ENCODE measurements at regions of chr3 and their contacts with region 1.

Region 1: DNA sequence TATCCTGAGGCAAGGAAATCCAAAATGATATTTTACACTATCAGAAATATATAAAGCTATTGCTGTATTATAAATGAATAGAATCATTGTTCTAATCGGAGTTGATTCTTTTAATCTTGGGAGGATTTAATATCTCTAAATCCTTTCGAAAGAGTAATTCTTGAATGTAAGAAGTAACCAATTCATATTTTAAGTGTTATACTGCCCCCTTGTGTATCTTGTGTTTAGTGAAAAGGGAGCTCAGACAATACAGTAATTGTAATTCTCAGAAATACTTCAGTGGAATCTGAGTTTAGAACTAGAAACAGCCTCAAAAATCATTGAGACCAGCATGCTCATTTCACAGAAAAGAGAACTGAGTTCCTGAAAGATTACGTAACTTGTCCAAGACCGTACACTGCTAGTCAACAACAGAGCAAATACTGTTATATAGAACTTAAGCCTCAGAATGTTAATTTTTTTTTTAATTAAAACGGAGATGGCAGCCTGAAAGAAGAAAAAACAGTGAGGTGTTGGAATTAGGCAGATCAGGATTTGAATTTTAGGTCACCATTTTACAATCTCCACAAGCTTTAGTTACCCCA is 42.9 kb downstream of the PLCH1 start:
- DNase-seq: peak in 3 of 14 experiments; percentile 51 to 57 (median 55)
- ATAC-seq: no peak
- H3K4me3 ChIP-seq: no peak overlapping the region
- H3K4me3 Mint-ChIP-seq: no peak overlapping the region
- H3K27ac ChIP-seq: no peak overlapping the region
- H3K27ac Mint-ChIP-seq: no peak overlapping the region
- H3K4me1 ChIP-seq: no peaks in the 10 kb centered on the region
- H3K4me1 Mint-ChIP-seq: no peaks in the 10 kb centered on the region
- H3K27me3 ChIP-seq: no peaks in the 10 kb centered on the region
- H3K27me3 Mint-ChIP-seq: peaks cover 3% of the 10 kb centered on the region
- CTCF ChIP-seq: peak; percentile 71

Region 2: GRCh38 chr3:154334973-154335420 is 1367.0 kb before region 1 on chr3:
- CTCF ChIA-PET with region 1: no interaction called
- POLR2A ChIA-PET with region 1: no interaction called
- intact Hi-C with region 1: loop called (anchors 1 to 2 kb)
- DNase-seq: peak in 3 of 14 experiments; percentile 40 to 58 (median 55)
- ATAC-seq: peak; percentile 51
- H3K4me3 ChIP-seq: no peak overlapping the region
- H3K4me3 Mint-ChIP-seq: no peak overlapping the region
- H3K27ac ChIP-seq: no peak overlapping the region
- H3K27ac Mint-ChIP-seq: no peak overlapping the region
- H3K4me1 ChIP-seq: no peaks in the 10 kb centered on the region
- H3K4me1 Mint-ChIP-seq: no peaks in the 10 kb centered on the region
- H3K27me3 ChIP-seq: peaks cover 0 to under 1% of the 10 kb centered on the region in 2 experiments
- H3K27me3 Mint-ChIP-seq: peaks cover 20% of the 10 kb centered on the region
- CTCF ChIP-seq: peak; percentile 77

Region 3: GRCh38 chr3:154758109-154758868 is 943.7 kb before region 1 on chr3:
- CTCF ChIA-PET with region 1: no interaction called
- POLR2A ChIA-PET with region 1: no interaction called
- intact Hi-C with region 1: loop called in 1 of 2 experiments (anchors 5 kb)
- DNase-seq: no peak
- ATAC-seq: no peak
- H3K4me3 ChIP-seq: no peak overlapping the region
- H3K4me3 Mint-ChIP-seq: no peak overlapping the region
- H3K27ac ChIP-seq: no peak overlapping the region
- H3K27ac Mint-ChIP-seq: no peak overlapping the region
- H3K4me1 ChIP-seq: no peaks in the 10 kb centered on the region
- H3K4me1 Mint-ChIP-seq: no peaks in the 10 kb centered on the region
- H3K27me3 ChIP-seq: no peaks in the 10 kb centered on the region
- H3K27me3 Mint-ChIP-seq: no peaks in the 10 kb centered on the region
- CTCF ChIP-seq: peak; percentile 19

Region 4: DNA sequence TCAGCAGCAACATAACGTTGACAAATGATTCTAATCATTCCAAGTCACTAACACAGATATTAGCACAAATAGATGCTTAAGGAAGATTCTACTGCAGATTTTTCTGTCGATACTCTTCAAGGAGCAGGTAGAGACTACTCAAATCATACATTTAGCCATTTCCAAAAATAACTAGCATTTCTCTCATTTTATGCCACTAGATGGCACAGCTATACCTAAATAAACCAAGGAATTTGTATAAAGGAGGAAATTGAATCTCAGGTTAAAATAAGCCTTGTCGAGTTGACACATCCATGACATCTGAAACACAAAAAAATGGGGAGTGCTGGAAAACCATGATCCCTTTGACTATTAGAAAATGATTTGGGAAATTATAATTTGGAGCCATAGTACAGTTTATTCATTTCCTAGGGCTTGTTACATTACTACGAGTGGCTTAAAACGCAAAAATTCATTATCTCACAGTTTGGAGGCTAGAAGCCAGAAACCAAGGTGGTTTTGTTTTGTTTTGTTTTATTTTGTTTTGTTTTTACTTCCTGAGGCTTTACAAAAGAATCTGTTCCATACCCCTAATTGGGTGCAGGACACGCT is 349.0 kb before region 1 on chr3:
- CTCF ChIA-PET with region 1: interaction called, 5 read pairs
- POLR2A ChIA-PET with region 1: no interaction called
- intact Hi-C with region 1: loop called in 1 of 2 experiments (anchors 2 kb)
- DNase-seq: peak in 3 of 14 experiments; percentile 18 to 25 (median 18)
- ATAC-seq: no peak
- H3K4me3 ChIP-seq: no peak overlapping the region
- H3K4me3 Mint-ChIP-seq: no peak overlapping the region
- H3K27ac ChIP-seq: no peak overlapping the region
- H3K27ac Mint-ChIP-seq: no peak overlapping the region
- H3K4me1 ChIP-seq: no peaks in the 10 kb centered on the region
- H3K4me1 Mint-ChIP-seq: no peaks in the 10 kb centered on the region
- H3K27me3 ChIP-seq: no peaks in the 10 kb centered on the region
- H3K27me3 Mint-ChIP-seq: no peaks in the 10 kb centered on the region
- CTCF ChIP-seq: peak; percentile 29